Esophagus muscularis mucosa (tissue), 4 donors: ENCODE measurements at regions of chr7 and their contacts with region 1.

Region 1: DNA sequence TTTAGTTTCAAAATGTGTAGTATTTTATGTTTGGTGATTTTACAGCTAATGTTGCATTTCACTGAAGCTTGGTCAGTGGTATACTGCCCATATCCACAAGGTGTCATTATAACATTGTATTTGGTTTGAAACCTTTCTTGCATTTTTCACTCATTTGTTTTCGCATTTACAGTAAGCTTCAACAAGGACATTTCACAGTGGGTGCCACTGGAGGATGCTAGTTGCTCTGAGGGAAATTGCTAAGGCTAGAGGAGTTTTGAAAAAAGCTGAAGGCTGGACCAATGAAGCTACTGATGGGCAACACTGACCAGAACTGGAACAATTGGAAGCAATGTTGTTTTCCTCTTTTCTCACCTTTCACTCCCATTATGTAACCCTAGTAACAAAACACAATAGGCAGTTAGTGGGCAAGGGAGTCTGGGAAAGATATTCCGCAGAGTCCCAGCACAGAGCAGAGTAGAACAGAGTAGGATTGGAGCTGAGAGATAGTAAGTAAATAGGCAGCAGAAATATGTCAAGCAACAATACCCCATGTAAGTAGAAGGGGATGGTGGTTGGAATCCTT is 23.6 kb upstream of the SRI start:
- DNase-seq: no peak
- H3K4me3 ChIP-seq: no peak overlapping the region
- H3K27ac ChIP-seq: no peak overlapping the region
- H3K4me1 ChIP-seq: peaks cover 0 to 4% (median 3%) of the 10 kb centered on the region in 4 donors
- H3K27me3 ChIP-seq: no peaks in the 10 kb centered on the region
- CTCF ChIP-seq: peak; percentile 57 to 71 (median 64)
- EP300 ChIP-seq: no peak
- POLR2A ChIP-seq: no peak

Region 2: DNA sequence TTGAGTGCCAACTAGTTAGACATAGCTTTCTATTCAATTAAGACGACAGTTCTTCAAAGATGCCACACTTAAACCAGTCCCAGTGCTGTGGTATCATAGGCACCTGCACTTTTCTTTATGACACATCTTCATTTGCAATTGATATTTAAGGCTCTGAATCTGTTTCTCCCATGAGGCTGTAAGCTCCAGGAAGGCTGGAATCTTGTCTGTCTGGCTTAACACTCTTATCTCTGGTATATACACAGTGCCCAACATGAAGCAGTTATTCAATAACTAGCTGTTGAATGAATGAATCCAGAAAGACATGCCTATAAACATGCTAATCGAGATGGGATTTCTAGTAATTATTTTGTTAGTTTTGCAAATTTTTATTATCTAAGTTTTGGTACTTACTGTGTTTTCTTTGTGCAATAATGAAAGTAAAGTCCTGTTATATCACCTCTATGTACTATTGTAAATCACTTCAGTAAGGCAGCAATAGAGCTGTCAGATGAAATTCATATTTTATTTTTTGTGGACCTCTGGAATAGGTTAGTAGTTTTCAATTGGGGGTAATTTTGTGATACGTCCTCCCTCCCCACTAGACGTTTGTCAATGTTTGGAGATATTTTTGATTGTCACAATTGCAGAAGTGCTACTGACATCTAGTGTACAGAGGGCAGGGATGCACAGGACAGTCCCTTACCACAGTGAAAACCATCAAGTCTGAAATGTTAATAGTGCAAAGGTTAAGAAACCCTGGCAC is 114.5 kb after region 1 on chr7:
- intact Hi-C with region 1: loop called (anchors 5 kb)
- DNase-seq: no peak
- H3K4me3 ChIP-seq: no peak overlapping the region
- H3K27ac ChIP-seq: no peak overlapping the region
- H3K4me1 ChIP-seq: no peaks in the 10 kb centered on the region
- H3K27me3 ChIP-seq: no peaks in the 10 kb centered on the region
- CTCF ChIP-seq: peak in 2 of 3 experiments; percentile 14 to 22
- EP300 ChIP-seq: no peak
- POLR2A ChIP-seq: no peak